Right ventricle myocardium inferior (tissue), 1 donor: ENCODE measurements at regions of chr6 and their contacts with region 1.

Region 1: GRCh38 chr6:99543968-99544367 is 24.5 kb downstream of the CCNC start:
- DNase-seq: no peak
- ATAC-seq: no peak

Region 2: GRCh38 chr6:99393698-99394531 is 150.1 kb before region 1 on chr6 and contains the start of gene COQ3:
- intact Hi-C with region 1: loop called (anchors 10 kb)
- DNase-seq: peak; percentile 88
- ATAC-seq: peak; percentile 88
- total RNA-seq, gene COQ3: 31.4 TPM